Panc1 (cell line): ENCODE measurements at regions of chr4 and their contacts with region 1.

Region 1: GRCh38 chr4:64713256-64713840 is 304.1 kb upstream of the TECRL start:
- DNase-seq: no peak
- ATAC-seq: no peak
- H3K4me3 ChIP-seq: no peak overlapping the region
- H3K27ac ChIP-seq: no peak overlapping the region
- H3K4me1 ChIP-seq: no peaks in the 10 kb centered on the region
- H3K27me3 ChIP-seq: no peaks in the 10 kb centered on the region
- CTCF ChIP-seq: peak; percentile 60; the same call in 1 of the 2 replicates

Region 2: DNA sequence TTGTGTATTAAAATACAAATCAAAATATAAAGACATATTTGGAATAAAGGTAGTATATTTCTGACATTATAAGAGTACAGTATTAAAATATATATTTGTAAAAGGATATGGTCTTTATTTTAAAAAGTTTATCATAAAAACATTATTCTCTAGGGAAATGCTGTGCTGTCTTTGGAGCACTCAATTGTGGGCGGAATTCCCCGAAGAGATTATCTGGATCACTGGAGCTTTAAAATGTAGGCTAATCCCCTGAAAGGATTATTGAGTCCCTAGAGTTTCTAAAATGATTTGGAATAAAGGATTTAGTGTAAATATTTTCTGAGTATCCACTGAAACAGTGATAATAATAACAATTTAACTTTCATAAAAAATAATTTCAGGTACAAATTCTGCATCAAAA is 1543.5 kb before region 1 on chr4:
- CTCF ChIA-PET with region 1: no interaction called
- POLR2A ChIA-PET with region 1: no interaction called
- in situ Hi-C with region 1: no loop called
- intact Hi-C with region 1: no loop called
- DNase-seq: no peak
- ATAC-seq: no peak
- H3K4me3 ChIP-seq: no peak overlapping the region
- H3K27ac ChIP-seq: no peak overlapping the region
- H3K4me1 ChIP-seq: no peaks in the 10 kb centered on the region
- H3K27me3 ChIP-seq: no peaks in the 10 kb centered on the region
- CTCF ChIP-seq: no peak

Region 3: DNA sequence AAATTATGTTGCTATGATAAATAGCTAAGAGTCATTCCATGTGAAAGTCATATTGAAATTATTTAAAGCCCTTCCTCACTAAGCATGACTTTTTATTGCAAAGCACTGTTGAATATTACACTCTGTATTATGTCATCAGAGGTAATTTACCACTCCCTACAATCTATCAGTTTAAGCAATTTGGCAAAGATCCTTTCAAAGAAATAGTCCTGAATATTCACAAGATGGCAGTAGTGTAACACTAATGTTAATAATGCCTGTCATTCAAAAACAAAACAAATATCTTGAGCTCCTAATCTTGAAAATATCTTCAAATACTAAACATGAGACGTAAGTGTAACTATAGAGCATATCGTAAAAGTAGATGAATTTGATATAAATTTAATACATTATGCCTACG is 95.5 kb before region 1 on chr4:
- CTCF ChIA-PET with region 1: interaction called, 4 read pairs
- POLR2A ChIA-PET with region 1: no interaction called
- in situ Hi-C with region 1: no loop called
- intact Hi-C with region 1: loop called (anchors 10 kb)
- DNase-seq: no peak
- ATAC-seq: no peak
- H3K4me3 ChIP-seq: no peak overlapping the region
- H3K27ac ChIP-seq: no peak overlapping the region
- H3K4me1 ChIP-seq: no peaks in the 10 kb centered on the region
- H3K27me3 ChIP-seq: no peaks in the 10 kb centered on the region
- CTCF ChIP-seq: peak; percentile 14; the same call in 1 of the 2 replicates